ENCODE measurements at regions of chr15 and their contacts with region 1.

Region 1: GRCh38 chr15:63157118-63157843 is at the start of gene RPS27L:
- DNase-seq: peak; percentile 88
- ATAC-seq: peak; percentile 98
- H3K4me3 ChIP-seq: peak within 1 kb of the TSS; percentile 78 to 96 (median 96)
- H3K27ac ChIP-seq: peak within 1 kb of the TSS; percentile 89
- H3K4me1 ChIP-seq: peaks cover 24% of the 10 kb centered on the region
- H3K27me3 ChIP-seq: no peaks in the 10 kb centered on the region; a peak in 1 of 5 replicates
- CTCF ChIP-seq: no peak
- EP300 ChIP-seq: no peak; a peak in 1 of 4 replicates
- POLR2A ChIP-seq: peak; percentile 91 to 95
- RAD21 ChIP-seq: peak; percentile 43; the same call in 1 of the 2 replicates
- total RNA-seq, gene RPS27L: 433 and 596 TPM in 2 replicates

Region 2: DNA sequence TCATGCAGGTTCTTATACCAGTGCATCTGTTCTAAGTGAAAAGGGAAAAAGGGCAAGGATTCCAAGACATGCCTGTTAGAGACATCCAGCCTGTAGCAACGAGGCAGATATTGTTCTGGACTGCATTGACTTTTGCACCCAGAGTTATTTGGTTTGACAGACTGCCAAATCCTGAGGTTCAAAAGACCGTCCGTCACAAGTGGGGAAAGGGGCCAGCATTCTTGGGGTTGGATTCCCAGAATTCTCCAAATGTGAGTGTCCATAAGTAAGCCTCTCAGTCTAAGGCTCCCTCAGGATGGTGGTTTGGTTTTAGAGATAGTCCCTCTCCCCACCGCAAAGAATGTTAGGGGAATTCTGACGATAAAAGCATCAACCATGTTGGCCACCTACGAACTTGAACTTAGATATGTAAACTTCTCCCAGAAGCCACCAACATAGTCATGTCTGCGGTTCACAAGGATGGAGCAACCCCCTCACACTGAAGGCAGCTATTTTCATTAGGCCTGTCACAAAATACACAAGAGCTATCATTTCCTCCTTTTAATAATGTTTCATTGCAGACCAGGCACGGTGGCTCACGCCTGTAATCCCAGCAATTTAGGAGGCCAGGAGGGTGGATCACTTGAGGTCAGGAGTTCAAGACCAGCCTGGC is 49.3 kb before region 1 on chr15:
- CTCF ChIA-PET with region 1: no interaction called
- POLR2A ChIA-PET with region 1: interaction called, 15 read pairs
- in situ Hi-C with region 1: no loop called
- intact Hi-C with region 1: loop called (anchors 5 kb)
- DNase-seq: peak; percentile 98
- ATAC-seq: peak; percentile 94
- H3K4me3 ChIP-seq: peak overlapping the region in 1 of 3 experiments; percentile 11; a peak in 1 of 6 replicates
- H3K27ac ChIP-seq: peak overlapping the region; percentile 71
- H3K4me1 ChIP-seq: peaks cover 64% of the 10 kb centered on the region
- H3K27me3 ChIP-seq: no peaks in the 10 kb centered on the region
- CTCF ChIP-seq: no peak
- EP300 ChIP-seq: peak; percentile 77 to 94; a peak in 3 of 4 replicates
- POLR2A ChIP-seq: no peak
- RAD21 ChIP-seq: 0 out of 2 replicates have a peak, but pooled peaks have one; percentile 30

Region 3: DNA sequence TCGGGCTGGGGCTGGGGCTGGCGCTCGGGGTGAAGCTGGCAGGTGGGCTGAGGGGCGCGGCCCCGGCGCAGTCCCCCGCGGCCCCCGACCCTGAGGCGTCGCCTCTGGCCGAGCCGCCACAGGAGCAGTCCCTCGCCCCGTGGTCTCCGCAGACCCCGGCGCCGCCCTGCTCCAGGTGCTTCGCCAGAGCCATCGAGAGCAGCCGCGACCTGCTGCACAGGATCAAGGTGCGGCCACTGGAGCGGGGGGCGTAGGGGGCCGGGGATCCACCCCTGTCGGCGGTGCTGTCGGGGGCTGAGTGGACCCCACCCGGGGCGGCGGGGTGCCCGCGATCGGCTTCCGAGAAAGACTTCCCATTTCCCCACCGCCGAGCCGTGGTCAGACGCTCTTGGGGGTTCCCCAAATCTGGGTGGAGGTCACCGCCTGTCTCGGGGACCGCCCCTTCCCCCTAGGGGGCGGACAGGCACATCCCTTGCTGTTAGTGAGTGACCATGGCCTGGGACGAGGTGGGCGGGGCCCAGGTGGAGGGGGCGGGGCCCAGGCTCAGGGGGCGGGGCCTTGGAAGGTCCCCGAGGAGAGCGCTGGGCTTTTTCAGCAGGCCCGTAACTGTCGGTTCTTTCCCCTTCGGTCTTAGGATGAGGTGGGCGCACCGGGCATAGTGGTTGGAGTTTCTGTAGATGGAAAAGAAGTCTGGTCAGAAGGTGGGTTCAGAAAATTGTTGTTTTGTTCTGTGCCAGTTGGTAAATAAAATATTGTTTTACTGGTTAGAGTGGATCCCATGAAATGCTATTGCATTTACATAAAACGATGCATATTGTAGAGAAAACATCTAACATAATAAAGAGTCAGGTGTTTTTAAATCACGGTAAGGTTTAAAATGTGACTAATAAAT is 35.0 kb before region 1 on chr15:
- CTCF ChIA-PET with region 1: no interaction called
- POLR2A ChIA-PET with region 1: interaction called, 13 read pairs
- in situ Hi-C with region 1: no loop called
- intact Hi-C with region 1: loop called (anchors 2 kb)
- DNase-seq: peak; percentile 73
- ATAC-seq: peak; percentile 96
- H3K4me3 ChIP-seq: peak overlapping the region; percentile 86 to 94 (median 94)
- H3K27ac ChIP-seq: peak overlapping the region; percentile 85
- H3K4me1 ChIP-seq: peaks cover 32% of the 10 kb centered on the region
- H3K27me3 ChIP-seq: no peaks in the 10 kb centered on the region
- CTCF ChIP-seq: peak; percentile 67
- EP300 ChIP-seq: no peak
- POLR2A ChIP-seq: peak; percentile 19 to 49; a peak in 3 of 4 replicates
- RAD21 ChIP-seq: no peak

Region 4: GRCh38 chr15:63146669-63147068 is 10.6 kb before region 1 on chr15:
- CTCF ChIA-PET with region 1: no interaction called
- POLR2A ChIA-PET with region 1: interaction called, 12 read pairs
- in situ Hi-C with region 1: no loop called
- intact Hi-C with region 1: no loop called
- DNase-seq: no peak
- ATAC-seq: peak; percentile 22; the same call in 2 of the 3 replicates
- H3K4me3 ChIP-seq: no peak overlapping the region
- H3K27ac ChIP-seq: no peak overlapping the region
- H3K4me1 ChIP-seq: no peaks in the 10 kb centered on the region
- H3K27me3 ChIP-seq: no peaks in the 10 kb centered on the region
- CTCF ChIP-seq: peak; percentile 23
- EP300 ChIP-seq: no peak
- POLR2A ChIP-seq: no peak; a peak in 1 of 4 replicates
- RAD21 ChIP-seq: no peak

Region 5: DNA sequence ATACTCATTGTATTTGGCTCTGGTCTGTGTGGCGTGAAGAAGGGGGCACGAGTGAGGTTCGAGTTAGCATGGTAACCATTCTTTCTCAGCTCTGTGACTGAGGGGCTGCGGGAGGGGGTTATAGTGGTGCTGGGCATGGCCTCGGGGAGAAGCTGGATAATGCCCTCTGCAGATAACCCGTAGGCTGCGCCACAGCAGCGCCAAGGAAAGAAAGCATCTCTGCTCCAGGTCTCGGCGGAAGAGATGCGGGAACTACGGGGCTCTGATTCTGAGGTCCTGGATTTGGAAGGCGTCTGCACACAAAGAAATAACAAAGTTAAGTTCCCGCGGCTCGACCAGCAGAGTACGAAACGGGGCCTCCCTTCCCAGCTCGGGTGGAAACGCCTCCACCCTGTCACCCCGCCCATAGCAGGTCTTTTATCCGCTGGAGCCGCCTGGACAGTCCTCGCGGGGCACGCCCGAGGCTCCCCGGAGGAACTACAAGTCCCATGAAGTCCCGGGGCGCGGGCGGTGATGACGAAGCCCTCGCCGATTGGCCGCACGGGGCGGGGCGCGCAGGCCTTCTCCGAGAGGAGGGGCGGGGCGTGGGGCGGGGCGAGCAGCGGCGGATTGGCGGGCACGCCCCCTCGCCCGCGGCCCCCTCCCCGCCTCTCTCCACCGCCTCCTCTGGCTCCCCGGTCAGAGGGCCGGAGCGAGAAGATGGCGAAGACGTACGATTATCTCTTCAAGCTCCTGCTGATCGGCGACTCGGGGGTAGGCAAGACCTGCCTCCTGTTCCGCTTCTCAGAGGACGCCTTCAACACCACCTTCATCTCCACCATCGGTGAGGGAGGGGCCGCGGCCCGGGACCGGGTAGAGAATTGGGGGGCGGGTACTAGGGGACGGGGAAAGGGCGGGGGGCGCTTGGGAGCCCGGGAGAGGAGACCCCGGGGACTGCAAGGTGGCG is 31.9 kb after region 1 on chr15 and contains the start of gene RAB8B:
- CTCF ChIA-PET with region 1: no interaction called
- POLR2A ChIA-PET with region 1: interaction called, 26 read pairs
- in situ Hi-C with region 1: no loop called
- intact Hi-C with region 1: no loop called
- DNase-seq: peak; percentile 89
- ATAC-seq: peak; percentile 98
- H3K4me3 ChIP-seq: peak within 1 kb of the TSS; percentile 82 to 93 (median 85)
- H3K27ac ChIP-seq: no peak within 1 kb of the TSS
- H3K4me1 ChIP-seq: peaks cover 77% of the 10 kb centered on the region
- H3K27me3 ChIP-seq: no peaks in the 10 kb centered on the region; a peak in 1 of 5 replicates
- CTCF ChIP-seq: 0 out of 2 replicates have a peak, but pooled peaks have one; percentile 26
- EP300 ChIP-seq: no peak
- POLR2A ChIP-seq: peak; percentile 46 to 77; a peak in 3 of 4 replicates
- RAD21 ChIP-seq: no peak
- total RNA-seq, gene RAB8B: 14.2 and 20.4 TPM in 2 replicates

Region 6: GRCh38 chr15:63277038-63277892 is 120.0 kb after region 1 on chr15 and contains the start of gene APH1B:
- CTCF ChIA-PET with region 1: no interaction called
- POLR2A ChIA-PET with region 1: interaction called, 7 read pairs
- in situ Hi-C with region 1: no loop called
- intact Hi-C with region 1: loop called (anchors 5 kb)
- DNase-seq: peak; percentile 31
- ATAC-seq: peak; percentile 92
- H3K4me3 ChIP-seq: peak within 1 kb of the TSS; percentile 50 to 69 (median 66)
- H3K27ac ChIP-seq: no peak within 1 kb of the TSS
- H3K4me1 ChIP-seq: peaks cover 17% of the 10 kb centered on the region
- H3K27me3 ChIP-seq: no peaks in the 10 kb centered on the region; a peak in 1 of 5 replicates
- CTCF ChIP-seq: no peak
- EP300 ChIP-seq: no peak
- POLR2A ChIP-seq: peak in 1 of 2 experiments; percentile 70; a peak in 2 of 4 replicates
- RAD21 ChIP-seq: no peak
- total RNA-seq, gene APH1B: 0.67 and 1.00 TPM in 2 replicates

Region 7: GRCh38 chr15:63402498-63403253 is 245.4 kb after region 1 on chr15:
- CTCF ChIA-PET with region 1: no interaction called
- POLR2A ChIA-PET with region 1: no interaction called
- in situ Hi-C with region 1: loop called (anchors 25 kb)
- intact Hi-C with region 1: loop called (anchors 1 kb)
- DNase-seq: peak; percentile 23
- ATAC-seq: peak; percentile 73
- H3K4me3 ChIP-seq: no peak overlapping the region
- H3K27ac ChIP-seq: no peak overlapping the region
- H3K4me1 ChIP-seq: peaks cover 36% of the 10 kb centered on the region
- H3K27me3 ChIP-seq: peaks cover 2 to 3% of the 10 kb centered on the region in 2 experiments; a peak in 2 of 5 replicates
- CTCF ChIP-seq: peak; percentile 55
- EP300 ChIP-seq: no peak
- POLR2A ChIP-seq: no peak
- RAD21 ChIP-seq: no peak